ENCODE measurements at regions of chr13 and their contacts with region 1.

Region 1: DNA sequence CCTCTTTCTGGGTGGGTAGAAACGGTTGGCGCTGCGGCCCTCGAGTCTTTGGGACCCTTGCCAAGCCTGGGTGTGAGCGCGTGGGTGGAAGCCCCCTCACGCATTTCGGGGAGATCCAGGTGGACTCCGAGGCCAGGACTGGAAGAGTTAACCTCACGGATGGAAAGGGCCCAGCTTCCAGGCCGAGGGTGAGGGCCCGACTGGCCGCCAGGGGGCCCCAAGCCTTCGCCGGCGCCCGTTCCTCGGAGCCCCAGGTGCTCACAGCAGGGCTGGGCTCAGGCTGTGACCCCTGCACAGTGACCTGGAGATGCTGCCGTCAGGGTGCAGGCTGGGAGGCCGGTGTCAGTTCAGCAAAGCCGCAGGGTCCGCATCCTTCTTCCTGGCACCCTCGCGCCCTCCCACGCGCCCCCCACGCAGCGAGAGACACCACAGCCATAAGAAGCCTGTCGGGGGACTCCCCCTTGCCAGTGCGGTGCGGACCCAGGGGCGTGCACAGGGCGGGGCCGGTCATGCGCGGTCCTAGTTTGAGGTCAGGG is 34.2 kb upstream of the TMEM255B start:
- DNase-seq: peak in 1 of 2 experiments; percentile 82
- H3K4me3 ChIP-seq: peak overlapping the region; percentile 47; the same call in 1 of the 2 replicates
- H3K27ac ChIP-seq: no peak overlapping the region
- H3K4me1 ChIP-seq: no peaks in the 10 kb centered on the region
- H3K27me3 ChIP-seq: peaks cover 15% of the 10 kb centered on the region
- CTCF ChIP-seq: peak; percentile 89

Region 2: GRCh38 chr13:113490496-113491417 is 234.1 kb before region 1 on chr13 and contains the start of gene DCUN1D2:
- CTCF ChIA-PET with region 1: no interaction called
- POLR2A ChIA-PET with region 1: interaction called, 18 read pairs
- intact Hi-C with region 1: no loop called
- DNase-seq: peak; percentile 76 to 96
- H3K4me3 ChIP-seq: peak within 1 kb of the TSS; percentile 86
- H3K27ac ChIP-seq: peak within 1 kb of the TSS; percentile 23
- H3K4me1 ChIP-seq: peaks cover 55% of the 10 kb centered on the region
- H3K27me3 ChIP-seq: no peaks in the 10 kb centered on the region
- CTCF ChIP-seq: no peak
- total RNA-seq, gene DCUN1D2: 33.0 and 34.7 TPM in 2 replicates